Brain microvascular endothelial cell (primary cell): ENCODE measurements at regions of chr12 and their contacts with region 1.

Region 1: GRCh38 chr12:56751712-56752598 is at the start of gene PRIM1:
- DNase-seq: peak; percentile 65
- H3K4me3 ChIP-seq: peak within 1 kb of the TSS; percentile 90
- H3K27ac ChIP-seq: no peak within 1 kb of the TSS
- H3K27me3 ChIP-seq: no peaks in the 10 kb centered on the region
- CTCF ChIP-seq: peak; percentile 8

Region 2: DNA sequence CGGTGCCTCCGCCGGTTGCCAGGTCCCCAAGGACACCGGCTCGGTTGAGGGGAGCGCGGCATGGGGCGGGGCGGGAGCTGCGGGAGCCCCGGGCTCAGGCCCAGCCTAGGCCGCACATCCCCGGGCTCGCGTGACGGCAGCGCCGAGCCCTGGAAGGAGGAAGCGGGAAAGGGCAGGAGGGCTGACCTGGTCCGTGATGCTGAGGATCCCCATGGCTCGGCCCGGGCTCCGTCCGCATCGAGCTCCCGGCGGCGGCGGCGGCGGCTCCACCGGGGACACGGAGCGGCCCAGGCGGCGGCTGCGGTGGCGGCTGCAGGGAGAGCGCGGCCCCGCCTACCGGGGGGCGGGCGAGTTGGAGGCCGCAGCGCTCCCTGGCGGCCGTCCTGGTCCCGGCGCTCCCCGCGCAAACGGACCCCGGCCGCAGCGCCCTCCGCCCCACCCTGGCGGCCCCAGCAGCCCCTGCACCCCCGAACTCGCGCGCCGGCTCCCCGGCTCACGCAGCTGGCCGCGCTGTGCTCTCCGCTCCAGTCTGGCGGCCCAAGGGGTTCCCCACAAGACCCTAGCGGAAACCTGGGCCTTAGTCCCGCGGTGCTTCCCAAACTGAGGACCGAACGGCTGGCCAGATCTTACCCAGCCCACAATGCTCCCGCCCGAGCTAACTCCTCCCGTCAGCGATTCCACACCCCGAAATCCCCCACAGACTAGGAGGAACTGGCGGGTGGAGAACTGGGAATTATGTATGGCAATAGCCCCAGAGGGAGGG is 493.7 kb before region 1 on chr12 and contains the start of gene ANKRD52:
- in situ Hi-C with region 1: no loop called
- DNase-seq: peak; percentile 43
- H3K4me3 ChIP-seq: peak within 1 kb of the TSS; percentile 83
- H3K27ac ChIP-seq: peak within 1 kb of the TSS; percentile 45
- H3K27me3 ChIP-seq: no peaks in the 10 kb centered on the region
- CTCF ChIP-seq: peak; percentile 53

Region 3: DNA sequence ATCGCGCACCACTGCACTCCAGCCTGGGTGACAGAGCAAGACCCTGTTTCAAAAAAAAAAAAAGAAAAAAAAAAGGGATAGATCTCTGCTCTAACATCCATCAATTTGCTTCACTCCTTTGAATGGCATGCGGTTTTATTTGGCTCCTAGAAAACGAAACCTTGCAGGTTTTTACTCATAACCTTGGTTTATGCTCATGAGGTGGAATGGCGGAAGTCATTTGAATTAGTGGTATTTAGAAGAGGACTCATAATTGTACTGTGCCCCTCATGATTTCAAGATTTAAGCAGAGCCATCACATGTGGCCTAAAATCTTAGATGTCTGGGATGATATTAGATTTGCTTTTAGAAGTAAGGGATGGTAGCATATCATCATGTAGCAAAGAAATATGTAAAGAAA is 200.9 kb before region 1 on chr12:
- in situ Hi-C with region 1: no loop called
- DNase-seq: no peak
- H3K4me3 ChIP-seq: no peak overlapping the region
- H3K27ac ChIP-seq: no peak overlapping the region
- H3K27me3 ChIP-seq: no peaks in the 10 kb centered on the region
- CTCF ChIP-seq: no peak

Region 4: GRCh38 chr12:56688129-56688845 is 63.7 kb before region 1 on chr12 and contains the start of gene PTGES3:
- in situ Hi-C with region 1: no loop called
- DNase-seq: peak; percentile 97
- H3K4me3 ChIP-seq: peak within 1 kb of the TSS; percentile 99
- H3K27ac ChIP-seq: peak within 1 kb of the TSS; percentile 92
- H3K27me3 ChIP-seq: no peaks in the 10 kb centered on the region
- CTCF ChIP-seq: no peak

Region 5: GRCh38 chr12:56987551-56988053 is 235.6 kb after region 1 on chr12:
- in situ Hi-C with region 1: loop called (anchors 25 kb)
- DNase-seq: peak; percentile 57
- H3K4me3 ChIP-seq: no peak overlapping the region
- H3K27ac ChIP-seq: no peak overlapping the region
- H3K27me3 ChIP-seq: no peaks in the 10 kb centered on the region
- CTCF ChIP-seq: peak; percentile 99